ENCODE measurements at regions of chr1 and their contacts with region 1.

Region 1: DNA sequence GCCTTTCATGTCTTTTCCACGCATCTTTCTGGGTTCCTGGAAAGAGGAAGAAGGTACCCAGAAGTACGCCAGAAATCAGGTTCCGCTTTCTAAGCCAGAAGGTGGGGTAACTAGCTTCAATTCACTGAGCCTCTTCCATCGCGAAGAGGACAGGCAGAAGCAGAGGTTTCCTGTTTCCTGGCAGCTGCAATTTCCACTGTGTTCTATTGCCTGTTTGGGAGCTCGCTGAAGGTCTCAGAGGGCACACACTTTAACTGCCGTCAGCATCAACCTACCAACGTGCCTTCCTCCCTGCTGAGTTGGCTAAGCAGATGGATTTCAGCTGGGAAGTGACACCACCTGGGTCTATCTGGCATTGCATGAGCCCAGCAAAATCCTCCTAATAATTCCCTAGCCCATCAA is 10.0 kb downstream of the NCF2 start:
- DNase-seq: peak; percentile 87 to 96 (median 91)
- H3K4me3 ChIP-seq: peak overlapping the region in 1 of 3 experiments; percentile 20
- H3K4me3 Mint-ChIP-seq: peak overlapping the region in 1 of 2 donors; percentile 15
- H3K27ac ChIP-seq: peak overlapping the region; percentile 72 to 76
- H3K27ac Mint-ChIP-seq: peak overlapping the region; percentile 87 to 98 (median 92)
- H3K4me1 ChIP-seq: peaks cover 76 to 78% of the 10 kb centered on the region in 2 donors
- H3K4me1 Mint-ChIP-seq: peaks cover 68% of the 10 kb centered on the region
- H3K27me3 ChIP-seq: no peaks in the 10 kb centered on the region
- H3K27me3 Mint-ChIP-seq: no peaks in the 10 kb centered on the region
- CTCF ChIP-seq: no peak

Region 2: DNA sequence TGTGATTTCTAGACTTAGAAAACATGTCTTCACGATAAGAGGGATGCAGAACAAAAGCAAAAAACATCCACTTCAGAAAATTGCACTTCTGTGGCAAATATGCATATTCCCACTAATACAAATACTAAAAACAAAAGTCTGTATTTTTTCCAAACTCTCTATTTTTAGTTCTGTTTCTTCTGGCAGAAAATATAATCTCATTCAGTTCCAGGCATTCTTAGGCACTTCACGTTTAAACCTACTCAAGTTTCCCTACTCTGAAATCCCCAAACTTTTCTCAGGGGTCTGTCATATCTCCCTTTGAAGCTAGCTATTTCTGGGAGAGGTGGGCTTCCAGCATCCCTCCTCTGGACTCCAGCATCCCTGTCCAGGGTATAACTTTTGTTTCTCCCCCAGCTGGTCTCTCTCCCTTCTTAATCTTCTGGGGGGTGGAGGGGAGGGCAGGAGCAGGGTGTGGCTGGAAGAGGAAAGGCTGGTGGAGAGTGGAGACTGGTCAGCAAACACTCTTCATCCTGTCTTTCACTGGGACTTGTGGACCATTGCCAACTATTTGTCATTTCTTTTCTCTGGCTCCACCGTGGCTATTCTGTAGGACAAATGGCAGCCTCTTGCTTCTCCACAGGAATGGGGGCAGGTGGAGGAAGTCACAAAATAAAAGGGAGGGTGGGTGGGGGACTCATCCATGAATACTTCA is 29.6 kb after region 1 on chr1:
- intact Hi-C with region 1: loop called in 1 of 2 experiments (anchors 5 kb)
- DNase-seq: no peak
- H3K4me3 ChIP-seq: no peak overlapping the region
- H3K4me3 Mint-ChIP-seq: peak overlapping the region in 1 of 2 donors; percentile 26
- H3K27ac ChIP-seq: peak overlapping the region; percentile 71 to 98
- H3K27ac Mint-ChIP-seq: peak overlapping the region; percentile 91 to 99 (median 98)
- H3K4me1 ChIP-seq: peaks cover 57 to 58% of the 10 kb centered on the region in 2 donors
- H3K4me1 Mint-ChIP-seq: peaks cover 57% of the 10 kb centered on the region
- H3K27me3 ChIP-seq: no peaks in the 10 kb centered on the region
- H3K27me3 Mint-ChIP-seq: peaks cover 0 to 5% (median 2%) of the 10 kb centered on the region in 3 donors
- CTCF ChIP-seq: no peak

Region 3: DNA sequence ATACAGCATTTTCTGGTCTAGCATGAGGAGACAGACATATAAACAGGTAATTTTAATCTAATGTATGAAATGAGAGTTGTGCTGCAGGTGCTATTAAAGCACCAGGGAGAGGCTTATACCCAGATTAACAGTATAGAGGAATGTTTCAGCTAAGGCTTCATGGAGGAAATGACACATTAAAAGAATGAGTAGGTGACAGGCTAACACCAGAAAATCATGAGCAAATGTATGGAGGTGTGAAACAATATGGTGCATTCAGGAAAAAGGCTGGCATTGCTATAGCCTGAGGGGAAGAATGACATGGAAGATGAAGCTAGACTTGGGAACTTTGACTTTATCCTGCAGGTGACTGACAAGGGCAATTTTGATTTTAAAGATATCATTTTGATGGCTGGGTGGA is 48.3 kb after region 1 on chr1:
- intact Hi-C with region 1: loop called (anchors 5 kb)
- DNase-seq: no peak
- H3K4me3 ChIP-seq: no peak overlapping the region
- H3K4me3 Mint-ChIP-seq: no peak overlapping the region
- H3K27ac ChIP-seq: peak overlapping the region in 1 of 2 donors; percentile 18
- H3K27ac Mint-ChIP-seq: peak overlapping the region in 5 of 7 donors; percentile 6 to 83 (median 74)
- H3K4me1 ChIP-seq: peaks cover 38 to 66% of the 10 kb centered on the region in 2 donors
- H3K4me1 Mint-ChIP-seq: peaks cover 49% of the 10 kb centered on the region
- H3K27me3 ChIP-seq: no peaks in the 10 kb centered on the region
- H3K27me3 Mint-ChIP-seq: no peaks in the 10 kb centered on the region
- CTCF ChIP-seq: no peak

Region 4: DNA sequence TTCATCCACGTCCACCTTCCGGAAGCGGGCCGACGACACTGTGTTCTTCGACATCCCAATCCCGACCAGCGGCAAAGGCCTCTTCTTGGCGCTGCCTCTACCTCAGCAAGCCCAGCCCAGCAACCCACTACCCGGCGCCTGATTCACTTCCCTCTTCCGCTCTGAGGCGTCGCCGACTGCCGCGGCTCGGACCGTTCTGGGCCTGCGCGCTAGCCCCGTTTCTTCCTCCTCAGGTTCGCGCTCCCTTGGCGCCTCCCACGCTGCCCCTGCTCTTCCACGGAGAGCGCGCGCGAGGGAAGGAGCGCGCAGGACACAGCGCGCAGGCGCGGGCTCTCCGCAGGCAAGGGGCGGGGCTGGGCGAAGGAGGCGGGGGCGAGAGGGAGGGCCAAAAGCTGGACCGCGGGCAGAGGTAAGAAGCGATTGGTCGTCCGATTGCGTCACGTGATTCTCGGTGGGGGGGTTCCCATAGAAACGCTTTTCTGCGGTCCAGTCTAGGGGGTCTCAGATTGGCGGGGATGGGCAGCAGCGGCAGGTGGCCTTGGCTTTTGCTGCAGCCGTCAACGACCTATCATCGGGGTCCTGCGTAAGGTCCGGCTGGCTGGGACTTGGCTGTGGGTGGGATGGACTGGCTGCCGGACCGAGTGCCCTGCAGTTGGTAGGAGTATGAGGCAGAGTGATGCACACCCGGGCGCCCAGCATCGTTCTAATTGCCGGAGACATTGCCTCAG is 55.5 kb after region 1 on chr1 and contains the start of gene ARPC5:
- intact Hi-C with region 1: loop called in 1 of 2 experiments (anchors 5 kb)
- DNase-seq: peak; percentile 98 to 99 (median 98)
- H3K4me3 ChIP-seq: peak within 1 kb of the TSS; percentile 88 to 98 (median 95)
- H3K4me3 Mint-ChIP-seq: peak within 1 kb of the TSS; percentile 100
- H3K27ac ChIP-seq: peak within 1 kb of the TSS; percentile 91 to 97
- H3K27ac Mint-ChIP-seq: peak within 1 kb of the TSS; percentile 97 to 100 (median 100)
- H3K4me1 ChIP-seq: peaks cover 26 to 48% of the 10 kb centered on the region in 2 donors
- H3K4me1 Mint-ChIP-seq: peaks cover 35% of the 10 kb centered on the region
- H3K27me3 ChIP-seq: no peaks in the 10 kb centered on the region
- H3K27me3 Mint-ChIP-seq: peaks cover 3 to 7% (median 5%) of the 10 kb centered on the region in 3 donors
- CTCF ChIP-seq: no peak
- polyA plus RNA-seq, gene ARPC5: 110 to 1,089 (median 1,064) TPM

Region 5: DNA sequence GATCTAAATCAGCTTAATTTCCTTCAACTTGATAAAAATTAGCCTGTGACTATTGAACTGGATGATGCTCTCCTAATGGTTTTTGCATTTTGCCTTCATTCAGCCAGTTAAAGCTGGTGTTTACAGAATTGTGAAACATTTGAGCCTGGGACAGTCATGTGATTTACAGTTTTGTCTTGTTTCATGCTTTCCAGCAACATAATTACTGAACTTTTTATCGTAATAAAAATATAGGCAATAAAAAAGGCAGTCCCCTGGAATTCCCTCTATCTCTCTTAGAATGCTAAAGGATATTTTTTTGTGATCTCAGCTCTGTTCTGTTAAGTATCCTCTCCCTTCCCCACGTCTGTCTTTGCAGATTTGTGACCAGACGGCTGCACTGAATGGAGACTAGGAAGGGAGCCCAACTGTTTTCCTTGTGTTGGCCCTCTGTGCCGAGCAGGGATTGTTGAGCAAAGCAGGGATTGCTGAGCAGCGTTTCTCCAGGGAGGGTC is 154.3 kb after region 1 on chr1:
- intact Hi-C with region 1: no loop called
- DNase-seq: no peak
- H3K4me3 ChIP-seq: no peak overlapping the region
- H3K4me3 Mint-ChIP-seq: no peak overlapping the region
- H3K27ac ChIP-seq: no peak overlapping the region
- H3K27ac Mint-ChIP-seq: no peak overlapping the region
- H3K4me1 ChIP-seq: no peaks in the 10 kb centered on the region
- H3K4me1 Mint-ChIP-seq: peaks cover 2% of the 10 kb centered on the region
- H3K27me3 ChIP-seq: no peaks in the 10 kb centered on the region
- H3K27me3 Mint-ChIP-seq: peaks cover 0 to 5% (median 3%) of the 10 kb centered on the region in 3 donors
- CTCF ChIP-seq: no peak